Heart left ventricle (tissue), 16 donors: ENCODE measurements at regions of chr3 and their contacts with region 1.

Region 1: GRCh38 chr3:56801662-56802377 is at the start of gene ARHGEF3:
- DNase-seq: peak; percentile 87 to 95 (median 90)
- ATAC-seq: peak; percentile 86 to 98 (median 96)
- H3K4me3 ChIP-seq: peak within 1 kb of the TSS; percentile 70 to 94 (median 86)
- H3K27ac ChIP-seq: peak within 1 kb of the TSS; percentile 26 to 87 (median 72)
- H3K4me1 ChIP-seq: peaks cover 3 to 50% (median 29%) of the 10 kb centered on the region in 12 donors
- H3K27me3 ChIP-seq: no peaks in the 10 kb centered on the region
- CTCF ChIP-seq: peak in 10 of 12 donors; percentile 26 to 61 (median 48)
- POLR2A ChIP-seq: peak in 1 of 2 donors; percentile 94
- total RNA-seq, gene ARHGEF3: 13.5 to 36.8 (median 18.2) TPM

Region 2: DNA sequence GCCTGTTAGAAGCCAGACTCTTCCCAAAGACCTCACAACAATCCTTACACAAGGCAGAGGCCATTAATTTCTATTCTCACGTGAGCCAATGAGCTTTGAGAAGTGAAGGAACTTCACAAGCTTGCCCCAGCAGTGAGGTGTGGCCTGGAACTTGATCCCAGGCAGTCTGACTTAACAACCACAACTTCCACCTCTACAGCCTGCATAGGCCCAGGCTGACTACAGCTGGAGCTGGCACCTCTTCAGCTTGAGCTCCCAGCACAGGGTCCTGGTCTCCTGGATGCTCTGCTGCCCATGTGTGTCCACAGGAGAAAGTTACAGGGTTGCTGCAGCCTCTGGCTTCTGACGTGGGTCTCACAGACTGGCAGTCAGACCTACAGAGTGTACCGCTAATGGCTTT is 444.6 kb before region 1 on chr3:
- intact Hi-C with region 1: no loop called
- DNase-seq: no peak
- ATAC-seq: no peak
- H3K4me3 ChIP-seq: no peak overlapping the region
- H3K27ac ChIP-seq: no peak overlapping the region
- H3K4me1 ChIP-seq: no peaks in the 10 kb centered on the region
- H3K27me3 ChIP-seq: no peaks in the 10 kb centered on the region
- CTCF ChIP-seq: no peak
- POLR2A ChIP-seq: no peak

Region 3: DNA sequence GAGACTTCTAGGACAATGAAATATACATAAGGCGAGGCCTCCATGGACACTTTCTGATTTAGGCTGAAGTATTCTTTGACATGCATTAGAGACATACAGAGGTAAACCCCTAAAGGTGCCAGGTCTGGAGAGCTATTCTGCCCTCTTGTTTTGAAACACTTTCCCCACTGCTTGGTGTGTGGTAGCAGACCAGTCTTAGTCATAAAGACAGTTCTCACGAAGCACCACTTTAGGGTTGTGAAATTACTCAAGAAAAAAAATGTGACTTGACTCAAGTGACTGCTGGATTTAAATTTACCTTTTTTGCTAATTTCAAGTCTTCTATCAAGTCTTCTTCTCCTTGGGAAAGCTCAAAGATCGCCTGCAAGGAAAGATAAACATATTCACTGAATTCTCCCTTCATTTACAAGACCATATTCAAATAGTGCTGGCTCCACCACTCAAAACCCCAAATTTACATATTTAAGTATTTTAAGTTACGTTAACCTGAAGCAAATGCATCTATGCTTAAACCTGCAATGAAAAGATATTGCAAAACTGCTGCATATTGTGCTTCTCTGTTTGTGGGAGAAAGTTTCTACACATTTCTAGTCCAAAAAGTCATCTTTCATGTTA is 48.5 kb before region 1 on chr3:
- intact Hi-C with region 1: loop called in 8 of 10 experiments (anchors 5 to 10 kb)
- DNase-seq: no peak
- ATAC-seq: no peak
- H3K4me3 ChIP-seq: no peak overlapping the region
- H3K27ac ChIP-seq: peak overlapping the region in 1 of 12 donors; percentile 92
- H3K4me1 ChIP-seq: peaks cover 4 to 76% (median 32%) of the 10 kb centered on the region in 12 donors
- H3K27me3 ChIP-seq: no peaks in the 10 kb centered on the region
- CTCF ChIP-seq: no peak
- POLR2A ChIP-seq: no peak

Region 4: GRCh38 chr3:56915966-56916586 is 114.3 kb after region 1 on chr3:
- intact Hi-C with region 1: loop called in 5 of 10 experiments (anchors 5 to 10 kb)
- DNase-seq: peak in 4 of 5 donors; percentile 36 to 62 (median 52)
- ATAC-seq: peak; percentile 74 to 86 (median 82)
- H3K4me3 ChIP-seq: peak overlapping the region in 11 of 12 donors; percentile 14 to 59 (median 46)
- H3K27ac ChIP-seq: peak overlapping the region; percentile 38 to 78 (median 66)
- H3K4me1 ChIP-seq: peaks cover 0 to 40% (median 13%) of the 10 kb centered on the region in 12 donors
- H3K27me3 ChIP-seq: no peaks in the 10 kb centered on the region
- CTCF ChIP-seq: peak in 1 of 12 donors; percentile 6
- POLR2A ChIP-seq: no peak

Region 5: GRCh38 chr3:56988458-56989168 is 186.8 kb after region 1 on chr3:
- intact Hi-C with region 1: loop called (anchors 1 to 5 kb)
- DNase-seq: peak; percentile 72 to 83 (median 81)
- ATAC-seq: peak; percentile 77 to 90 (median 86)
- H3K4me3 ChIP-seq: peak overlapping the region in 2 of 12 donors; percentile 7 to 25
- H3K27ac ChIP-seq: peak overlapping the region in 7 of 12 donors; percentile 2 to 46 (median 26)
- H3K4me1 ChIP-seq: peaks cover 0 to 33% (median 16%) of the 10 kb centered on the region in 12 donors
- H3K27me3 ChIP-seq: no peaks in the 10 kb centered on the region
- CTCF ChIP-seq: peak; percentile 70 to 92 (median 82)
- POLR2A ChIP-seq: no peak

Region 6: DNA sequence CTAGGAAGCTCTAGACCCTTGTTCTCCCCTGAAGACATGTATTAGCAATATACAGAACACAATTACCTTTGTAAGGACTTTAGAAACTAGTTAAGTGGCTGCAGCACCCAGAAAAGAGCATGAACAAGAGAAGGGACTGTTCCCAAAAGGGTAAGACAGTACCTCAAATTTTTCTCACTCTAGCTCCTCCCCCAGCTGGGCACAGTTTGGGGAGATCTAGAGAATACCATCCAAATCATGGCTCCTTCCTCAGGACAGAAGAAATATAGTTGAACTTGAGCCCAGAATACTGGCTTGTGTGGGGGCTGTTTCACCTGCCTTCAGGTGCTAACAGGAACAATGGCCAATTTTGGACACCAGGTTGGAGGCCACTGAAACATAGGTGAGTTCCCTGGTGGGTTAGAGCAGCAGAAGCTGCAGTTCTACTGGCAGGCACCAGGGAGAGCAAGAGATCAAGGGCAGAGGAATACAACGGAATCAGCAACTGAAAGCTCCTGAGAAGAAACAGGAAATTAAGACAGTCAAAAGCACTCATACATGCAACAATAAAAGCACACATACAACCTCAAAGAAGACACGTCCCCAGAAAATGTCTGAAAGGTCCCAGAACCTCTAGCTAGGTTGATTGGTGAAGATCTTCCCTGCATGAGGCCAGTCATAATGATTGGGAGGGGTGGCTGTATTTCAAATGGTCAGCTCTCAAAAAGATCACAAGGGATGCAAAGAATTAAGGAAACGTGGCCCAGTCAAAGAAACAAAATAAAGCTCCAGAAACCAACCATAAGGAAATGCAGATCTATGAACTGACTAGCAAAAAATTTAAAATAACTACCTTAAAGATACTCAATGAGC is 595.6 kb after region 1 on chr3:
- intact Hi-C with region 1: no loop called
- DNase-seq: peak in 3 of 5 donors; percentile 18 to 29 (median 23)
- ATAC-seq: peak in 3 of 4 donors; percentile 66 to 85 (median 75)
- H3K4me3 ChIP-seq: no peak overlapping the region
- H3K27ac ChIP-seq: no peak overlapping the region
- H3K4me1 ChIP-seq: peaks cover 0 to 4% (median 0%) of the 10 kb centered on the region in 12 donors
- H3K27me3 ChIP-seq: no peaks in the 10 kb centered on the region
- CTCF ChIP-seq: peak; percentile 58 to 79 (median 73)
- POLR2A ChIP-seq: no peak

Region 7: DNA sequence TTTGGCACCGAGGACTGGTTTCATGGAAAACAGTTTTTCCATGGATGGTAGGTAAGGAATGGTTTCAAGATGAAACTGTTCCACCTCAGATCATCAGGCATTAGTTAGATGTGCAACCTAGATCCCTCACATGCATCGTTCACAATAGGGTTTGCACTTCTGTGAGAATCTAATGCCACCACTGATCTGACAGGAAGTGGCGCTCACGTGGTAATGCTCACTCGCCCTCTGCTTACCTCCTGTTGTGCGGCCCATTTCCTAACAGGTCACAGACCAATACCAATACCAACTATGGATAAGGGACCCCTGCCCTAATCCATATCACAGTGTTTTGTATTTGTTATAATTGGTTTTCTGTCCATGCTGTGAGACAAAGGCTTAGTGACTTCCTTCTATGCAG is 1013.2 kb after region 1 on chr3:
- intact Hi-C with region 1: loop called in 1 of 10 experiments (anchors 10 kb)
- DNase-seq: no peak
- ATAC-seq: no peak
- H3K4me3 ChIP-seq: no peak overlapping the region
- H3K27ac ChIP-seq: no peak overlapping the region
- H3K4me1 ChIP-seq: peaks cover 0 to 28% (median 8%) of the 10 kb centered on the region in 12 donors
- H3K27me3 ChIP-seq: no peaks in the 10 kb centered on the region
- CTCF ChIP-seq: no peak
- POLR2A ChIP-seq: no peak